IMR-90 (cell line): ENCODE measurements at regions of chr15 and their contacts with region 1.

Region 1: DNA sequence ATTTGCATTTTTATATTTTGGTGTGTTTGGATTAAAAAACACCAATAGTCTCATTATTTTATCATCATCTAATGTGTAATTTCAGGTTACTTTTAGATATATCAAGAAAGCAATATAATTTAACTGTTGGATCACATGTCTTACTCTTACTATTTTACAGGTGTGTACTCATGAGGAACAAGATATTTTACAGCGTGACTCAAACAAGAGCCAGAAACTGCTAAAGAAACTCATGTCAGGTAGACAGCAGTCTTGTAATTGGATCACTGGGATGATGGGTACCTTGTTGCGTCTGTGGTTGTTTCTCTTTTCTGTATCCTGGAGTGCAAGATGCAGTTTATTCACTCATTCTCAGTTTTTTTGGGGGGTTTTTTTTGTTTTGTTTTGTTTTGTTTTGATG is 12.9 kb downstream of the TRIP4 start:
- DNase-seq: no peak
- ATAC-seq: no peak
- H3K4me3 ChIP-seq: no peak overlapping the region
- H3K27ac ChIP-seq: no peak overlapping the region
- H3K4me1 ChIP-seq: 0 out of 2 replicates have a peak, but pooled peaks cover 1% of the 10 kb centered on the region
- H3K27me3 ChIP-seq: no peaks in the 10 kb centered on the region
- CTCF ChIP-seq: no peak
- POLR2A ChIP-seq: no peak
- RAD21 ChIP-seq: no peak

Region 2: GRCh38 chr15:64333986-64334929 is 66.3 kb before region 1 on chr15:
- CTCF ChIA-PET with region 1: no interaction called
- POLR2A ChIA-PET with region 1: interaction called, 10 read pairs
- dilution Hi-C with region 1: no loop called
- in situ Hi-C with region 1: no loop called
- intact Hi-C with region 1: no loop called
- DNase-seq: peak; percentile 21
- ATAC-seq: peak; percentile 69
- H3K4me3 ChIP-seq: no peak overlapping the region
- H3K27ac ChIP-seq: no peak overlapping the region
- H3K4me1 ChIP-seq: peaks cover 2% of the 10 kb centered on the region; the same call in 1 of the 2 replicates
- H3K27me3 ChIP-seq: no peaks in the 10 kb centered on the region
- CTCF ChIP-seq: no peak
- POLR2A ChIP-seq: no peak
- RAD21 ChIP-seq: no peak